Endothelial cell of umbilical vein (primary cell): ENCODE measurements at regions of chrX and their contacts with region 1.

Region 1: GRCh38 chrX:108224727-108225621 is 133.4 kb downstream of the ATG4A start:
- DNase-seq: peak; percentile 37
- H3K4me3 ChIP-seq: no peak overlapping the region
- H3K27ac ChIP-seq: no peak overlapping the region
- H3K4me1 ChIP-seq: no peaks in the 10 kb centered on the region
- H3K27me3 ChIP-seq: peaks cover 0 to 2% of the 10 kb centered on the region in 2 experiments
- CTCF ChIP-seq: peak; percentile 26 to 32
- POLR2A ChIP-seq: no peak

Region 2: GRCh38 chrX:108165383-108166111 is 59.4 kb before region 1 on chrX:
- CTCF ChIA-PET with region 1: interaction called, 17 read pairs
- POLR2A ChIA-PET with region 1: no interaction called
- dilution Hi-C with region 1: no loop called
- intact Hi-C with region 1: no loop called
- DNase-seq: peak; percentile 12
- H3K4me3 ChIP-seq: no peak overlapping the region
- H3K27ac ChIP-seq: no peak overlapping the region
- H3K4me1 ChIP-seq: peaks cover 7% of the 10 kb centered on the region
- H3K27me3 ChIP-seq: no peaks in the 10 kb centered on the region
- CTCF ChIP-seq: peak; percentile 13 to 41
- POLR2A ChIP-seq: no peak

Region 3: DNA sequence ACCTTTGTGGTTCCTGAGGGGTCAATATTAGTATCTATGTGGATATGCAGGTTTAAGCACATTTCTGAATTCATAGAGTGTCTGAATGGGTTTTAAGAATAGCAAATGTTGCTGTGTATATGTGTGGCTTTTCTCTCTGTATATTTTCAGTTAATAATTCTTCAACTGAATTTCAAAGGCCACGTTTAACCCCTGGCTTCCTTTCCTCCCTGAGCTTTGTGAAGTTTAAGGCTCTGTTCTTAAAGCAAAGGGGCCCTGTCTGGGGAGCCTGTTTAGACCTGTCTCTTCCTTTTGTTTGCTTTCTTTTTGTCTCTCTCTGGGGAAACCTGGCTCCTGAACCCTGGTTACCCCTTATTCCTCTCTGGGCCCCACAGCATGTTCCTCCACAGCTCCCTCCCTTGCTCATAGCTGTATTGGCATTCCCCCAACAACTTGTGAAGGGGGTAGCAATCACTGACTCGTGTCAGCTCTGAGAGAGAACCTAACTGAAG is 74.2 kb after region 1 on chrX:
- CTCF ChIA-PET with region 1: interaction called, 72 read pairs
- POLR2A ChIA-PET with region 1: no interaction called
- dilution Hi-C with region 1: no loop called
- intact Hi-C with region 1: loop called (anchors 2 kb)
- DNase-seq: peak; percentile 60
- H3K4me3 ChIP-seq: no peak overlapping the region
- H3K27ac ChIP-seq: no peak overlapping the region
- H3K4me1 ChIP-seq: no peaks in the 10 kb centered on the region
- H3K27me3 ChIP-seq: no peaks in the 10 kb centered on the region
- CTCF ChIP-seq: no peak
- POLR2A ChIP-seq: no peak

Region 4: DNA sequence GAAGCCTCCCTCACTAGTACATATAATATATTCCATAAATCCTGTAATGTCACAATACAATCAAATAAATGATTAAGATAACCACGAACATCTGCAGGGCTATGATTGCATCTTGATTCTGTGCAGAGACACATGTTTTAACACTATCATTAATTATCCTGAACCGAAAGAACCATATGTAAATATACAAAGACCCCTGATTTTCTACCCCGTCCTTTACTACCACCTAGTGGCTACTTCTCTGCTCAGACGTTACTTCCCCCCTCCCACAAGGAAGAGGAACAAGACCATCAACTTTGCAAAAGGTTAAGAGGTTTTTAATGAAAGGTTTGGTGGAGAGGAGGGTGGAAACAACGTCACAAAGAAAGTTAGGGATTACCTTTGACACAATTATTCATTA is 79.2 kb after region 1 on chrX:
- CTCF ChIA-PET with region 1: interaction called, 72 read pairs
- POLR2A ChIA-PET with region 1: no interaction called
- dilution Hi-C with region 1: no loop called
- intact Hi-C with region 1: loop called (anchors 2 kb)
- DNase-seq: peak; percentile 30
- H3K4me3 ChIP-seq: no peak overlapping the region
- H3K27ac ChIP-seq: no peak overlapping the region
- H3K4me1 ChIP-seq: no peaks in the 10 kb centered on the region
- H3K27me3 ChIP-seq: no peaks in the 10 kb centered on the region
- CTCF ChIP-seq: peak in 1 of 2 donors; percentile 26
- POLR2A ChIP-seq: no peak

Region 5: GRCh38 chrX:108439434-108439883 is 214.5 kb after region 1 on chrX and contains the start of gene COL4A5:
- CTCF ChIA-PET with region 1: interaction called, 15 read pairs
- POLR2A ChIA-PET with region 1: no interaction called
- dilution Hi-C with region 1: no loop called
- intact Hi-C with region 1: no loop called
- DNase-seq: peak; percentile 79
- H3K4me3 ChIP-seq: peak within 1 kb of the TSS; percentile 37 to 76 (median 66)
- H3K27ac ChIP-seq: peak within 1 kb of the TSS; percentile 19
- H3K4me1 ChIP-seq: peaks cover 8% of the 10 kb centered on the region
- H3K27me3 ChIP-seq: peaks cover 0 to 2% of the 10 kb centered on the region in 2 experiments
- CTCF ChIP-seq: no peak
- POLR2A ChIP-seq: no peak
- total RNA-seq, gene COL4A5: 15.4 and 28.1 TPM in 2 replicates

Region 6: DNA sequence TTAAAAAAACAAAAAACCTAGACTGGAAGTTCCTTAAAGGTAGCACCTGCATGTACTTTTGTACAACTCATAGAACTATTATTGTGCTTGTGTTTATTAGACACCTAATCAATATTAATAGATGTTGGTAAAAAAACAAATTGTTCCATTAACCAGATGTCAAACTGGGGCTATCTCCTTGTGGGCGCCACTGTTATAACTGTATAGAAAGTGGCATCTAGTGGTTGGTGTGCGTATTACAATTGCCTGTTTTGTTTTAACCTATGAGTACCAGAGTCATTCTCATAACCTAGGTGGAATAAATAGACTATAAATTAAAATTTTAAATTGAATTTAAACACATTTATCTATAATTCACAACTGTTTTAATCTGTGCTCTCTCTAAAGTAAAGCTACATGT is 312.0 kb after region 1 on chrX:
- CTCF ChIA-PET with region 1: interaction called, 117 read pairs
- POLR2A ChIA-PET with region 1: no interaction called
- dilution Hi-C with region 1: no loop called
- intact Hi-C with region 1: loop called (anchors 1 kb)
- DNase-seq: peak; percentile 47
- H3K4me3 ChIP-seq: no peak overlapping the region
- H3K27ac ChIP-seq: no peak overlapping the region
- H3K4me1 ChIP-seq: no peaks in the 10 kb centered on the region
- H3K27me3 ChIP-seq: no peaks in the 10 kb centered on the region
- CTCF ChIP-seq: peak; percentile 29 to 37
- POLR2A ChIP-seq: no peak

Region 7: GRCh38 chrX:108699368-108699767 is 474.4 kb after region 1 on chrX:
- CTCF ChIA-PET with region 1: interaction called, 10 read pairs
- POLR2A ChIA-PET with region 1: no interaction called
- dilution Hi-C with region 1: no loop called
- intact Hi-C with region 1: no loop called
- DNase-seq: peak; percentile 42
- H3K4me3 ChIP-seq: no peak overlapping the region
- H3K27ac ChIP-seq: no peak overlapping the region
- H3K4me1 ChIP-seq: no peaks in the 10 kb centered on the region
- H3K27me3 ChIP-seq: no peaks in the 10 kb centered on the region
- CTCF ChIP-seq: peak; percentile 7 to 21
- POLR2A ChIP-seq: no peak